Activated B cell treated with CpG ODN at 0.5 μM for 24 hours (primary cell): ENCODE measurements at regions of chr1 and their contacts with region 1.

Region 1: DNA sequence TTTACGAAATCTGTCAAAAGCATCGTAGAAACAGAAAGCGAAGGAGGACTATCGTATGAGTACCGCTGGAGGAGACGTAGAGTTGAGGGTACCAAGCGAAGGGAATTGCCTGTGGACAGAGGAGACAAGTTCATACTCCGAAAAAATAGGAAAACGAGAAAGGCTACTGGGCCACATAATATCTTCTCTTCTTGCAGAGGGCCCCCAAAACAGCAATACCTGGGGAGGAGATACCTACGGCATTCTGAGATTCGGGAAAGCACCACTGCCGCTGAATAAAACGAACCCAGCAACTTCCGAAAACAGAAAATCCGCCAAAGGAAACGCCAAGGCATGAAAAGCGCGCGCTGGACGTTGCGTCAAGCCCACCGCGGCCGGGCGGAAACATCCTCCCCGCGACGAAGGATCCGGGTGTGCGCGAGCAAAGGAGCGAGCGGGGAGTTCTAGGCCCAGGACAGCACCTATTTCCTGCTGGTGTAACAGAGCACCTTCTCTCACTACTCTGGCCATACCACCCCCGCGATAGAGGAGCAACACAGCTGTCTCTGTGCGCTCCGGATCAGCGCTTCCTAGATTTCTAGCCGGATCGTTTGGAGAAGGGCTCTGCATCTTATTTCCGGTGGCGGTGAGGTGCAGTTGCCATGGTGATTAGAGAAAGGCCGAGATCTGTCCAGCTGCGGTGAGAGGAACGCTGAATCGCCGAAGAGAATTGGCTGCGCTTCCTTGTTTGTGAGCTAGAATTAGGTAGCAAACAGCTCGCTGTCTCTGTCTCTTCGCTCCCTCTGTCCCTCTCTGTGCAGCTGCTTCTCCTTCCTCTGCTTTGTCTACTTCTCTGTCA is at the starts of genes EFCAB7 and ITGB3BP:
- DNase-seq: peak; percentile 78
- ATAC-seq: peak; percentile 87
- H3K4me3 Mint-ChIP-seq: peak within 1 kb of the TSS; percentile 97
- H3K27ac Mint-ChIP-seq: peak within 1 kb of the TSS; percentile 98
- H3K4me1 Mint-ChIP-seq: peaks cover 22% of the 10 kb centered on the region
- H3K27me3 Mint-ChIP-seq: no peaks in the 10 kb centered on the region
- CTCF ChIP-seq: no peak
- total RNA-seq, gene EFCAB7: 7.5 and 8.6 TPM in 2 replicates
- total RNA-seq, gene ITGB3BP: 24.9 and 27.0 TPM in 2 replicates

Region 2: DNA sequence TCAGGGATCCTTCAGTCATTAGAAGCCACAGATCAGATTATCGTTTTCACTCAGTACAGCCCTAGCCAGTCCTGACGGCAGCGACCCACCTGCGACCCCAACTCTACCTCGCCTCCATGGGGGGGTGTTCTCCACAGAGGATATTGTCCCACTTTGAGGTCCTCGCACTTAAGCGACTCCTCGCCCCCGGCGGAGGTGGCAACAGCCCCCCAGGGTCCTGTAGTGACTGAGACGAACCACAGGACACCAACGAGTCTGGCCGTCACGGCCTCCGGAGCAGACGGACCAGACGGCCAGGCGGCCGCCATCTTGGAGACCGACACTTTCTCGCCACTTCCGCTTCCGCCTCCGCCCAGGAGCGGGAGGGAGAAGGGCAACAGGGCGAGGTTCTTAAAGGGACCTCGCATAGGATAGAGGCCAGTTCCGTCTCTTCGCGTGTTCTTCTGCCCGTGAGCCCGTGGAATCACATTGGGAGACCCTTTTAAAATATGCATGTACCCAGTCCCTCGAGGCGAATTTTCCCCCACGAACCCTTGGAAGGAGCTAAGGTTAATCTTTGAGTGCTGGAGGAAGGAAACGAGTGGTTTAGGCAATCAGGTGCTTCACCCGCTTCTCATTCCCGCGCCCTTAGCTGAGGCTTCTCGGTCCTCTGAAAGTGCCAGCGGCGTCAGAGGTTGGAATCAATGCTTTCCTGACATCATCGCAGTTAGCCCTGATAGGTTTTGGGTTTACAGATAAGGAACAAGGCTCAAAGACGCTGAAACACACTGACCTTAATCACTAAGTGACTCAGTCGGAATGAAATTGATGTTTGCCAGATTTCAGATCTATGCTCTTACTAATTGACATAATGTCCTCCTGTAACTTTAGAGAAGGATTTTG is 1798.1 kb before region 1 on chr1 and contains the start of gene TM2D1:
- CTCF ChIA-PET with region 1: no interaction called
- POLR2A ChIA-PET with region 1: no interaction called
- intact Hi-C with region 1: loop called (anchors 2 kb)
- DNase-seq: peak; percentile 81
- ATAC-seq: peak; percentile 97
- H3K4me3 Mint-ChIP-seq: peak within 1 kb of the TSS; percentile 99
- H3K27ac Mint-ChIP-seq: peak within 1 kb of the TSS; percentile 98
- H3K4me1 Mint-ChIP-seq: peaks cover 20% of the 10 kb centered on the region
- H3K27me3 Mint-ChIP-seq: no peaks in the 10 kb centered on the region
- CTCF ChIP-seq: no peak
- total RNA-seq, gene TM2D1: 33.6 and 41.4 TPM in 2 replicates

Region 3: DNA sequence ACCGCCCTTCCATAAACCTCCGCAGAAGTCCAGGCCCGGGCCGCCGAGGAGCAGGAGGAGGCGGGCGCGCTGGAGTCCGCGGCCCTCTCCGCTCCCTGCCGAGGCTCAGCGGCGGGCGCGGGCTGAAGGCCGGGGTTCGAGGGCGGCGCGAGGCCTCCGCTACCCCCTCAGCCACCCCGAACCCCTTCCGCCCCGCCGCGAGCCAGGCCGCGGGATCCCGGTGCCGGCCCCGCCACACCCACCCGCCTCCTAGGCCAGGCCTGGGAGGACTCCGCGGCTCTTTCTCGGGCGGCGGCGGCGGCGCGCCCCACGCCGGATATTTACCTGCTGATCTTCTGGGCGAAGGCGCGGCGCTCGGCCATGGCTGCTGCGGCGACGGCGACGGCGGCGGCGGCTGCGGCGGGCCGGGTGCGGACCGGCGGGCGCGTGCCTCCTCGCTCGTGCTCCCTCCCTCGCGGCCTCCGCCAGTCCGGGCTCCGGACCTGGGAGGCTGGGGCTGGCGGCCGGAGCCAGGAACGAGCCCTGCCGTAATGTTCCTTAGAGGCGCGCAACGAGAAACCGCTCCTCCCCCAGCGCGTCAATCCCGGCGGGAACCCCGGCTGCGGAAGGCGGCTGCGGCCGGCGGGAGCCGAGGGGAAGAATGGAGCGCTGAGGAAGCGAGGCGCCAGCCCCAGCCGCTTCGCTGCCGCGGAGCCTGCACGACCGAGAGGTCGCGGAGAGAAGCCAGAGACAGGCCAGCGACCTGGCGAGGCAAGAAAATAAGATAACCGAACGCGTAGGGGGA is 835.0 kb before region 1 on chr1 and contains the start of gene DOCK7:
- CTCF ChIA-PET with region 1: no interaction called
- POLR2A ChIA-PET with region 1: no interaction called
- intact Hi-C with region 1: loop called (anchors 10 kb)
- DNase-seq: peak; percentile 55
- ATAC-seq: peak; percentile 72
- H3K4me3 Mint-ChIP-seq: peak within 1 kb of the TSS; percentile 89
- H3K27ac Mint-ChIP-seq: peak within 1 kb of the TSS; percentile 76
- H3K4me1 Mint-ChIP-seq: peaks cover 23% of the 10 kb centered on the region
- H3K27me3 Mint-ChIP-seq: no peaks in the 10 kb centered on the region
- CTCF ChIP-seq: no peak
- total RNA-seq, gene DOCK7: 13.4 and 18.0 TPM in 2 replicates

Region 4: DNA sequence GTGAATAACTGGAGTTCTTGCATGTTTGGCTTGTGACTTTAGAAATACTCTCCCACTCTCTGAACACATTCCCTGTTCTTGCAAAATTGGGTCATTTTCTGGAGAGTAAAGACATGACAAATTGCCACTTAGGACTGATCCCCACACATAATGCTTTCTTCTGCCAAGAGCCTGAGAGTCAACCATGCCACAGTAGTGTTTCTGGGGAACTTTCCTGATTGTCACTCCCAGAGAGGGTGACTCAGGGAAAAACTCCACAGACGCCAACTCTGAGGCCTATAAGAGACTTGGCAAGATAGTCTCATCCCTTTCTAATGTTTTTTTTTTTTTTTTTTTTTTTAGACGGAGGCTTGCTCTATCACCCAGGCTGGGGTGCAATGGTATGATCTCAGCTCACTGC is 581.3 kb before region 1 on chr1:
- CTCF ChIA-PET with region 1: no interaction called
- POLR2A ChIA-PET with region 1: no interaction called
- intact Hi-C with region 1: no loop called
- DNase-seq: no peak
- ATAC-seq: no peak
- H3K4me3 Mint-ChIP-seq: no peak overlapping the region
- H3K27ac Mint-ChIP-seq: no peak overlapping the region
- H3K4me1 Mint-ChIP-seq: no peaks in the 10 kb centered on the region
- H3K27me3 Mint-ChIP-seq: peaks cover 21% of the 10 kb centered on the region
- CTCF ChIP-seq: no peak

Region 5: DNA sequence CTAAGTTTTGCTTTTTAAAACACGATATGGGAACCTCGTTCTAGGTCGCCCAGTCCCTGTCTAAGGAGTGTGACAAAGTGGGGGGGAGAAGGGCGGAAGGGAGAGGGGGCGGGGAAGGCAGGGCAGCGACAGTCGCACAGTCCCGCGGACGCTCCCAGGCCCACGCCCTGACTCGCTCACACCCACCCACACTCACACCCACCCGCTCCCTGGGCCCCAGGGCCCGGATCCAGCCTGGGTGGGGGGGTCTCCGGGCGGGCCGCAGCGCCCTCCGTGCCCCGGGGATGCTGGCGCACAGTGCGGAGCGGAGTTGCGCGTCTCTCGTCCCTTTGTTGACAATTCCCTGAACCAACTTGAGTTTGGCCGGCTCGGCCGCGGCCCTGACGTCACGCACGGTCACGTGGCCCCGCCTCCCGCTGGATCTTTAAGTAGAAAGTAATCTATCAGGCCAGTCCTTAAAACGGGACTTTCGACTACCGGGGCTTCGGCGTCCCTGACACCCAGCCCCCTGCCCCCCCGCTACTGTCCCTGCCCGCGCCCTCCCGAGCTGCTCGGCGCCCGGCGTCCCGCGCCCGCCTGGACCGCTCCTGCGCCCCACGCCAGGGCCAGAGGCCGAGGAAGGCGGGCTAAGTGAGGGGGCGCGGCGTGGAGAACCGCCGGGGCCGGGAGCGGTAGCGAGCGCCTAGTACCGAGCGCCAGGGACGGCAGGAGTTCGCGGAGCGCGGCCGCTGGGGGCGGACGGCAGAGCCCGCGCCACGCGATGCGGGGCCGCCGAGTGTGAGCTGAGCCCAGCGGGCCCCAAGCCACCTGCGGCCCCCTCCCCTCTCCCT is 200.8 kb before region 1 on chr1 and contains the start of gene FOXD3:
- CTCF ChIA-PET with region 1: no interaction called
- POLR2A ChIA-PET with region 1: no interaction called
- intact Hi-C with region 1: loop called (anchors 5 kb)
- DNase-seq: peak; percentile 31
- ATAC-seq: peak; percentile 39
- H3K4me3 Mint-ChIP-seq: peak within 1 kb of the TSS; percentile 78
- H3K27ac Mint-ChIP-seq: peak within 1 kb of the TSS; percentile 77
- H3K4me1 Mint-ChIP-seq: peaks cover 31% of the 10 kb centered on the region
- H3K27me3 Mint-ChIP-seq: peaks cover 57% of the 10 kb centered on the region
- CTCF ChIP-seq: no peak
- total RNA-seq, gene FOXD3: not detected in 2 replicates

Region 6: GRCh38 chr1:63367215-63368103 is 155.7 kb before region 1 on chr1 and contains the start of gene ALG6:
- CTCF ChIA-PET with region 1: no interaction called
- POLR2A ChIA-PET with region 1: no interaction called
- intact Hi-C with region 1: loop called (anchors 1 kb)
- DNase-seq: peak; percentile 100
- ATAC-seq: peak; percentile 92
- H3K4me3 Mint-ChIP-seq: peak within 1 kb of the TSS; percentile 98
- H3K27ac Mint-ChIP-seq: peak within 1 kb of the TSS; percentile 86
- H3K4me1 Mint-ChIP-seq: peaks cover 21% of the 10 kb centered on the region
- H3K27me3 Mint-ChIP-seq: peaks cover 9% of the 10 kb centered on the region
- CTCF ChIP-seq: no peak
- total RNA-seq, gene ALG6: 20.0 and 21.5 TPM in 2 replicates

Region 7: DNA sequence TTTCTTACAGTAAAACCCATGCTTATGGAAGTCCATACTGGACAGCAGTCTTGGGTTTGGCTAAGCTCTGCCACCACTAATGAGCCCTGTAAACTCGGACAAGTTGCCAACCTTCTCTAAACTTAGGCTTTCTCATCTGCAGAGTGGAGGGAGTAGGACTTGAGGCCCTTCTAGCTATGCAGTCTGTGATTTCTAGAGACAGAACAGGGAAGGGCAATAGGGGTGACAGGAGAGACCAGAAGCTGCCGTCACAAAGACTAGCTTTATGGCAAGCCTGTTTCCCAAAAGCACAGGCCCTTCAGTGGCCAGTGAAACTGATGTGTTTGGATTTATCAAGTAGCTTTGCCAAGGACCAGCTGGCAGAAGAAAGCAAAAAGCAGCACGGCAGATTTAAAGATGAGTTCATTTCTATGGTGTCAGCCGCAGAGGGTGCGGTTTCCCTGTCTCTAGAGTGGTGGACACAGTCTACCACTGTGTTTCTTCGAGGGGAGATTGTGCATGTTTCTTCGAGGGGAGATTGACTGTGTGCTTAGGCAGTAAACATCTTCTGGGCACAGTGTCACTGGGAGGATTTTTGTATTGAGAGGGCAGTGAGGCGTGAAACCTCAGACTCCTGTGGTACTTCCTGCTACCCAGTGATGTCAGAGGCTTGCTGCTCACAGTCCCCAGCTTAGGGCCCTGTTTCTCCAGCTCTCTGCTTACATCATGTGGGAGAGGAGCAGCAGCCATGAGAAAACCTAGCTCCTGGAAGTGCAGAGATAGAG is 369.7 kb after region 1 on chr1:
- CTCF ChIA-PET with region 1: no interaction called
- POLR2A ChIA-PET with region 1: no interaction called
- intact Hi-C with region 1: loop called (anchors 5 kb)
- DNase-seq: peak; percentile 46
- ATAC-seq: peak; percentile 89
- H3K4me3 Mint-ChIP-seq: peak overlapping the region; percentile 59
- H3K27ac Mint-ChIP-seq: peak overlapping the region; percentile 83
- H3K4me1 Mint-ChIP-seq: peaks cover 53% of the 10 kb centered on the region
- H3K27me3 Mint-ChIP-seq: peaks cover 9% of the 10 kb centered on the region
- CTCF ChIP-seq: no peak